Heart left ventricle (tissue), 16 donors: ENCODE measurements at regions of chr9 and their contacts with region 1.

Region 1: DNA sequence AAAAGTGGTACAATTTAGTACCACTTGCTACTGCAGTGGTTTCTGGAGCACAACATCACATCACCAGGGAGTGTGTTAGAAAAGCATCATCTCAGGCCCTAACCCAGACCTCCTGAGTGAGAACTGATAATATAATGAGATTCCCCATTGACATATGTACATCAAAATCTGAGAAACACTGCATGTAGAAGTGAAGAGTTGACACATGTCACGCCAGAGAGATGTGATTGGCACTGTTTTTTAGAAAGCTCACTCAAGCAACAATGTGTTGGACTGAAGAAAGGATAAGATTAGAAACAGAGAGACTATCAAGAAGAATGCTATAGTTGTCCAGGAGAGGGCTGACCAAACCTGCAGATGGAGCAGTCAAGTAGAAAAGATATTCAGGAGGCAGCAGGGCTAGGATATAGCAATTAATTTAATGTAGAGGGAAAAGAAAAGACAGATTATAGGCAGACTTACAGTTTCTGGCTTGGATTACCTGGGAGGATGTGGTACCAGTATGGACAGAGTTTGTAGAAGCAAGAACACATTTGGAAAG is 324.4 kb upstream of the ADAMTSL1 start:
- DNase-seq: no peak
- ATAC-seq: no peak
- H3K4me3 ChIP-seq: no peak overlapping the region
- H3K27ac ChIP-seq: no peak overlapping the region
- H3K4me1 ChIP-seq: no peaks in the 10 kb centered on the region
- H3K27me3 ChIP-seq: no peaks in the 10 kb centered on the region
- CTCF ChIP-seq: peak in 1 of 12 donors; percentile 12
- POLR2A ChIP-seq: no peak

Region 2: DNA sequence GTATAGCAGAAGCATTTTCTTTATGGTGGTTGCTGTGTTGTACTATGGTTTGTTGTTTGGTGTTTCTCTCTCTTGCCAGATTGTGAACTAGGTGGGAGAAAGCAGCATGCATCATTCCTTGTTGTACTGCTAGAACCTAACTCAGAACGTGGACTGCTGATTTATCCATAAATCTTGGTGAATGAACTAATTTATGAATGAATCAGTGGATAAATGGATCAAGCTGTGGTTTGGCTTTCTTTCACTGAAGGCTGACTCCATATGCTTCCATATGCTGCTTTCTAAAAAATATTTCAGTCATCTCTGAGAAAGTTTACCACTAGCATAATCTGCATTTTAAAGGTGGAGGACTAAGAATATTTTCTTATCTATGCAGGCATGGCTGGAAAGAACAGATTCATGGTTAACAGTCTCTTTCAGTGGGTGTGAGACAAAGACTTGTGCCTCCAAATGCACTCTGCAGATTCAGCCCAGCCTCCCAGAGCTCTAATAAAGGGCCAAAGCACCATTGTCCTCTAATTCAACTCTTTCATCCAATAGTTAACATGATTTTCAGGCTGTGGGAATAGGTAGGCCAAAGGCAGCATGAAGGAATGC is 333.0 kb before region 1 on chr9:
- intact Hi-C with region 1: loop called in 2 of 10 experiments (anchors 5 kb)
- DNase-seq: no peak
- ATAC-seq: no peak
- H3K4me3 ChIP-seq: no peak overlapping the region
- H3K27ac ChIP-seq: no peak overlapping the region
- H3K4me1 ChIP-seq: no peaks in the 10 kb centered on the region
- H3K27me3 ChIP-seq: no peaks in the 10 kb centered on the region
- CTCF ChIP-seq: no peak
- POLR2A ChIP-seq: no peak